PC-3 (cell line): ENCODE measurements at regions of chr15 and their contacts with region 1.

Region 1: DNA sequence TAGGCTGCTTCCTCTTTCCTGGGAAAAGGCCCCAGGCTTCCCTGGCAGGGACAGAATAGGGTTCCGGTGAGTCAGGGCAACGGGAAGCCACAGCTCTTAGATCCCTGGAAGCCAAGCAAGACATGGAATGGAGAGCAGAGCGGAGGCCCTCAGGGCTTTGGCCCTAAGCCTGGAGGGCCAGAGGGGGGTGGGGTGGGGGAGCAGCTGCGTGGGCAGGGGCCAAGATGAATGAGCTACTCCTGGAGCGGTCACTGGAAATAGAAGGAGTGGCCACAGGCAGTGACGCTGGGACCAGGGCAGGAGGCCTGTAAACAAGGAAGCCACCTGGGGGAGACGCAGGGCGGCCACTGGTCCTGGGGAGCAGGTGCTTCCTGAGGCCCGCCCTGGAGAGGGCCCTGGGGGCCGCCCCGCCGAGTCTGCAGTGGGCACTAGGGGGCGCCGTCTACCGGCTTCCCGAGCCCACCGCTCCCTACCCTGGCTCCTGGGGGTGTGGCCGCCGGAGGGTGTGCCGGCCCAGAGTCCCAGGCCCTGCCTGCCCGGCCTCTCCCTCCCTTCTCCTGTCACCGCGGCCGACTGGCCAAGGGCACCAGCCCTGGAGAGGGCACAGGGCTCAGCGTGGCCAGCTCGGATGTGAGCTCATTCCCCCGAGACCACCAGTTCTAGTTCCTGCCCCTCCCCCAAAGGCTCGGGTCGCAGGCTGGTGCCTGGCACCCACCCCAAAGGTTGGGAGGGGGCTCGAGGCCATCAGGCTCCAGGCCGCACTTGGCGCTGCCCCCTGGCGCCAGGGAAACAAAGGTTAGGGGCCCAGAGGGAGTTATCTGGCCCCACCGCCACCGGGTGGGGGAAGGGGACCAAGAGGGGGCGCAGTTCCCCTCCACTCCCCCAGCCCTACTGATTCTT is 12.1 kb downstream of the VPS18 start:
- DNase-seq: peak; percentile 98
- ATAC-seq: peak; percentile 80
- H3K4me3 ChIP-seq: peak overlapping the region; percentile 67
- H3K27ac ChIP-seq: peak overlapping the region; percentile 98
- H3K4me1 ChIP-seq: peaks cover 29% of the 10 kb centered on the region
- H3K27me3 ChIP-seq: no peaks in the 10 kb centered on the region
- CTCF ChIP-seq: peak; percentile 85

Region 2: DNA sequence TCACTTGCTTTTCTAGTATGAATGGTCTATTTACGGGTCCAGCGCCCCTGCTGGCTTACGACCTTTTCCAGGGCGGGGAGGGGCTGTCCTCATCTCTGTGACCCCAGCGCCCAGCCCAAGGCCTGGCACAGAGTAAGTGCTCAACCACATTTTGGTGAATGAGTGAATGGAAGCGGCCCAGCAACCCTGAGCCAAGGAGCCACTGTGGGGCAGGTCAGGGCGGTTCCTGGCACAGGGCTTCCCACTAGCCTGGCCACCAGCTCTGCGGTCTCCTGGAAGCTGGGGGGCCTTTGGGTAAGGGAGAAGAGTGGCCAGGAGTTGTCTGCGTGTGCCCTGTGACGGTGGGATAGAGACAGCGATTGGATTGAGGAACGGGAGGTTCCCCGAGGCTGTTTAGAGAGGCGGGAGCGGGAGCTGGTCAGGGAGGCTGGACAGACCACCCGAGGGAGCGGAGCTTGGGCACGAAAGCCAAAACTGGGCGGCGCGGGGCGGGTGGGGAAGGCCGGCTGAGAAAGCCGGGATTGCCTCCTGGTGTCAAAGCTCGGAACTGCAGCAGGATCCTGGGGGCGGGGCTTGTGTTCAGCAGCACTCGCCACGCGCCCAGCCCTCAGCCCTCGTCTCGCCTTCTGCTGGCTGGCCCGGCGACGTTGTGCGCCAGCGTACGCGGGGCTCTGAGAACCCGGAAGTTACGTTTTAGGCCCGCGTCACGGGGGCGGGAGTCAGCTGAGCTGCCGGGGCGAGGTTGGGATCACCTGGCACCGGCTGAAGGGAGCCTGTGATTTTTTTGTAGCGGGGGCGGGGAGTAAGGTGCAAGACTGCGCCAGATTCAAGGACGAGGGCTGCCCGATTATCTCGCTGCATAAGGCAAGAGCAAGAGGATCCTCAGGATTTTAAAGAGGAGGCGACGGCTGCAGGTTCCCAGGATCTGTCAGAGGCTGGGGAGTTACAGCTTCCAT is 12.3 kb before region 1 on chr15 and contains the start of gene VPS18:
- CTCF ChIA-PET with region 1: interaction called, 13 read pairs
- POLR2A ChIA-PET with region 1: no interaction called
- intact Hi-C with region 1: no loop called
- DNase-seq: peak; percentile 99
- ATAC-seq: peak; percentile 92
- H3K4me3 ChIP-seq: peak within 1 kb of the TSS; percentile 87
- H3K27ac ChIP-seq: peak within 1 kb of the TSS; percentile 81
- H3K4me1 ChIP-seq: peaks cover 16% of the 10 kb centered on the region
- H3K27me3 ChIP-seq: no peaks in the 10 kb centered on the region
- CTCF ChIP-seq: peak; percentile 74
- total RNA-seq, gene VPS18: 37.6 and 39.5 TPM in 2 replicates

Region 3: DNA sequence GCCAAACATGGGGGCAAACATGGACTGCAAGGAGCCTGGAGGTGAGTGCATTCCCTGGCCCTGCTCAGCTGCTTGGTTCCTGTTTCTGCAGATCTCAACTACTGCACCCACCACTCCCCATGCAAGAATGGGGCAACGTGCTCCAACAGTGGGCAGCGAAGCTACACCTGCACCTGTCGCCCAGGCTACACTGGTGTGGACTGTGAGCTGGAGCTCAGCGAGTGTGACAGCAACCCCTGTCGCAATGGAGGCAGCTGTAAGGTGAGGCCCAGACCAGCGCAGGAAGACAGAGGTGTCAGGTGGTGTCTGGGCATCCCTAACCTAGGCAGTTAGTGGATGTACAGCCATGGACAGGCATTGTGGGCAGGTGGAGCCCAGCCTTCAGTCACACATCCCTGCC is 28.1 kb after region 1 on chr15:
- CTCF ChIA-PET with region 1: interaction called, 16 read pairs
- POLR2A ChIA-PET with region 1: no interaction called
- intact Hi-C with region 1: loop called (anchors 1 kb)
- DNase-seq: no peak
- ATAC-seq: no peak
- H3K4me3 ChIP-seq: no peak overlapping the region
- H3K27ac ChIP-seq: no peak overlapping the region
- H3K4me1 ChIP-seq: peaks cover 47% of the 10 kb centered on the region
- H3K27me3 ChIP-seq: peaks cover 5% of the 10 kb centered on the region; the same call in 1 of the 2 replicates
- CTCF ChIP-seq: no peak

Region 4: GRCh38 chr15:40952901-40953712 is 46.8 kb after region 1 on chr15 and contains the start of gene CHAC1:
- CTCF ChIA-PET with region 1: no interaction called
- POLR2A ChIA-PET with region 1: interaction called, 17 read pairs
- intact Hi-C with region 1: loop called (anchors 1 kb)
- DNase-seq: peak; percentile 97
- ATAC-seq: peak; percentile 91
- H3K4me3 ChIP-seq: peak within 1 kb of the TSS; percentile 79
- H3K27ac ChIP-seq: peak within 1 kb of the TSS; percentile 35
- H3K4me1 ChIP-seq: peaks cover 16% of the 10 kb centered on the region
- H3K27me3 ChIP-seq: no peaks in the 10 kb centered on the region
- CTCF ChIP-seq: no peak
- total RNA-seq, gene CHAC1: 6.2 and 13.3 TPM in 2 replicates

Region 5: DNA sequence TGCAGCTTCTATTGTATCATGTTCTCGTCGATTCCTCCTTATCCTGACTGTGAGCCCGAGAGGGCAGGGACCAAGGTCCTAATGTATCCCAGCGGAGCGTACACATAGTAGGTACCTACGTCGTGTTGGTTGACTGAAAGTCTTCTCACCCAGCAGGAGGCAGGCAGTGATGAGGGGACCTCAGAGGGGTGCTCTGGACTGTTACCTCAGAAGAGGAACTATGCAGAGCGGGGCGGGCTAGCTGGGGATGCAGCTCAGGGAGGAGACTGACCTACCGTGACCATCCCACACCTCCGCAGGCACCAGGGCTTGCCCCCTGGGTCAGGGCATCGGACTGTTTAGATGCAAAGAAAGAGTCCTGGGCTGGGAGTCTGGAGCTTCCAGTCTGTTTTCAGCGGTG is 58.3 kb after region 1 on chr15:
- CTCF ChIA-PET with region 1: no interaction called
- POLR2A ChIA-PET with region 1: no interaction called
- intact Hi-C with region 1: no loop called
- DNase-seq: no peak
- ATAC-seq: no peak
- H3K4me3 ChIP-seq: no peak overlapping the region
- H3K27ac ChIP-seq: no peak overlapping the region
- H3K4me1 ChIP-seq: peaks cover 23% of the 10 kb centered on the region
- H3K27me3 ChIP-seq: no peaks in the 10 kb centered on the region
- CTCF ChIP-seq: no peak

Region 6: GRCh38 chr15:40999190-40999589 is 92.8 kb after region 1 on chr15:
- CTCF ChIA-PET with region 1: no interaction called
- POLR2A ChIA-PET with region 1: no interaction called
- intact Hi-C with region 1: loop called (anchors 5 kb)
- DNase-seq: peak; percentile 96
- ATAC-seq: peak; percentile 84
- H3K4me3 ChIP-seq: 0 out of 2 replicates have a peak overlapping the region, but pooled peaks have one; percentile 4
- H3K27ac ChIP-seq: peak overlapping the region; percentile 95
- H3K4me1 ChIP-seq: peaks cover 43% of the 10 kb centered on the region
- H3K27me3 ChIP-seq: no peaks in the 10 kb centered on the region
- CTCF ChIP-seq: no peak

Region 7: DNA sequence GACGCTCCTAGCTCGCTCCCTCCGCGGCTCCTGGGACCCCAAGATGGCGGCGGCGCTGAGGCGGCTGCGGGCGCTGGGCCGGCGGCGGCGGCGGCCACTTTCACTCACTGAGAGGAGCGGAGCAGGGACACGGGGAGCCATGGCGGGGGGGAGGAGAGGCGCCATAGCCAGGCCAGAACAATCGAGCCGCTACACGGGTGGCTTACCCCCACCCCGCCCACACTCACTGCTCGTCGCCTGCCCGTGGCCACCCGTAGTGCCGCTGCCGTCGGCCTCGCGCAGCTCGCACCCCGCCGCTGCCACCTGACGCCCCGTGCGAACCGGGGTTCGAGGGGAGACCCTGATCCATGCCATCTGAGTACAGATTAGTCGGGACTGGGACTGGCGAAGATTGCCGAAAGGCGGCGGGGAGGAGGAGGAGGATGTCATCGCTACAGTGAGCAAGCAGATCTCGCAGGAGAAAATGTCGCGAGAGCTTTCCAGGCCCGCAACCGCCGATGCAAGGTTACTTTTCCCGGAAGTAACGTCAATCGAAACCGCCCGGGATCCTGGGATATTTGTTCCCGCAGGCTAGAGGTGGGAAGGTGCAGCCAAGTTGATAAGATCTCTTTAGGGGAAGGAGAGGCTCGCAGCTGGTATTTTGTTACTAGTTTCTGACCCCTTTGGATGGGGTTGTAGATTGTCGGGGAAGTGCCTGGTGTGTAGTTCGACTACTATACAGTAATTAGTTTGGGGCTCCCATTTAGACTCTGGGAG is 210.0 kb after region 1 on chr15 and contains the start of gene INO80:
- CTCF ChIA-PET with region 1: no interaction called
- POLR2A ChIA-PET with region 1: no interaction called
- intact Hi-C with region 1: loop called (anchors 10 kb)
- DNase-seq: peak; percentile 99
- ATAC-seq: peak; percentile 88
- H3K4me3 ChIP-seq: peak within 1 kb of the TSS; percentile 89
- H3K27ac ChIP-seq: peak within 1 kb of the TSS; percentile 93
- H3K4me1 ChIP-seq: peaks cover 11% of the 10 kb centered on the region
- H3K27me3 ChIP-seq: no peaks in the 10 kb centered on the region
- CTCF ChIP-seq: no peak
- total RNA-seq, gene INO80: 38.4 and 47.7 TPM in 2 replicates